Colonic mucosa (tissue), 4 donors: ENCODE measurements at regions of chr6 and their contacts with region 1.

Region 1: GRCh38 chr6:78961513-78961912 is 94.2 kb downstream of the IRAK1BP1 start:
- DNase-seq: no peak
- H3K4me3 ChIP-seq: no peak overlapping the region
- H3K27ac ChIP-seq: no peak overlapping the region
- H3K4me1 ChIP-seq: no peaks in the 10 kb centered on the region
- H3K27me3 ChIP-seq: no peaks in the 10 kb centered on the region
- CTCF ChIP-seq: no peak

Region 2: GRCh38 chr6:79064635-79065034 is 103.1 kb after region 1 on chr6:
- intact Hi-C with region 1: loop called (anchors 10 kb)
- DNase-seq: no peak
- H3K4me3 ChIP-seq: no peak overlapping the region
- H3K27ac ChIP-seq: no peak overlapping the region
- H3K4me1 ChIP-seq: no peaks in the 10 kb centered on the region
- H3K27me3 ChIP-seq: no peaks in the 10 kb centered on the region
- CTCF ChIP-seq: no peak

Region 3: DNA sequence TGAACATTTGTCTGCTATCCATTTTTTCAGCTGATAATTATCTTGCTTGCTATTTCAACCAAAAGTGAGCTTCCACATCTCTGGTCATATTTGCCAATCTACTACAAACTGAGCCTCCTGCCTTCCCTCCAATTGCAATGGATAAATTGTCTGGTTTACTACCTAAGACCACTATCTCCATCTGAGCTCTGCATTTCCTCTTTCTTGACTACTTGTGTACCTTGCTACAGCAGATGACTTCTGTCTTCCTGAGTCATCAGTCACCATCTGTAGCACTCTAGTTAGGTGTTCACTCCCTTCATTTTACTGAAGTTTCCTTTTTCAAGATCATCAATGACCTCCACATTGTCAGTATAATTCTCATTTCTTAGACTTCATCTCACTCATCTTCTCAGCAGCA is 150.0 kb after region 1 on chr6:
- intact Hi-C with region 1: no loop called
- DNase-seq: no peak
- H3K4me3 ChIP-seq: no peak overlapping the region
- H3K27ac ChIP-seq: no peak overlapping the region
- H3K4me1 ChIP-seq: no peaks in the 10 kb centered on the region
- H3K27me3 ChIP-seq: no peaks in the 10 kb centered on the region
- CTCF ChIP-seq: no peak

Region 4: GRCh38 chr6:79257381-79258205 is 296.1 kb after region 1 on chr6:
- intact Hi-C with region 1: no loop called
- DNase-seq: no peak
- H3K4me3 ChIP-seq: no peak overlapping the region
- H3K27ac ChIP-seq: no peak overlapping the region
- H3K4me1 ChIP-seq: no peaks in the 10 kb centered on the region
- H3K27me3 ChIP-seq: no peaks in the 10 kb centered on the region
- CTCF ChIP-seq: no peak